ENCODE measurements at regions of chr3 and their contacts with region 1.

Region 1: GRCh38 chr3:14775011-14775410 is 43.8 kb upstream of the FGD5 start:
- DNase-seq: peak in 1 of 2 donors; percentile 61
- H3K4me3 ChIP-seq: no peak overlapping the region
- H3K27ac ChIP-seq: no peak overlapping the region
- H3K4me1 ChIP-seq: no peaks in the 10 kb centered on the region
- H3K27me3 ChIP-seq: no peaks in the 10 kb centered on the region
- CTCF ChIP-seq: no peak
- POLR2A ChIP-seq: no peak

Region 2: GRCh38 chr3:14312371-14312770 is 462.6 kb before region 1 on chr3:
- intact Hi-C with region 1: loop called (anchors 5 kb)
- DNase-seq: no peak
- H3K4me3 ChIP-seq: no peak overlapping the region
- H3K27ac ChIP-seq: no peak overlapping the region
- H3K4me1 ChIP-seq: no peaks in the 10 kb centered on the region
- H3K27me3 ChIP-seq: no peaks in the 10 kb centered on the region
- CTCF ChIP-seq: no peak
- POLR2A ChIP-seq: no peak

Region 3: DNA sequence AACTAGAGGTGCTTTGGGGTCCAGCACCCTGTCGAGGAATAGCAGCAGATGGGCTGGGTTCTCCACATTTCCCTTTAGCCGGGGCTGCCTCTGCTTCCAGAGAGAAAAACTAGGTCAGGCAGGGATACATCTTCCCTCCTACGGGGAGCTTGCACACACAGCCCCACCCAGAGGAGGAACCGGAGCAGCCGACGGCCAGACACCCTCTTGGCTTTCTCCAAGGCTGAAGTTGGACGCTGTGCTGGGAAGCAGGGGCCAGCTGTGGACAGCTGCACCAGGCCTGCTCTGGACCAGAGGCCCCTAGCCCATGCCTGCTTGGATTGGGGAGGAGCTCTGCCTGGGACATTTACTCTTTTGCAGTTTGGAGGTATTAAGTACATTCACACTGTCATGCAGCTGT is 127.7 kb after region 1 on chr3:
- intact Hi-C with region 1: no loop called
- DNase-seq: no peak
- H3K4me3 ChIP-seq: no peak overlapping the region
- H3K27ac ChIP-seq: peak overlapping the region; percentile 53
- H3K4me1 ChIP-seq: peaks cover 9% of the 10 kb centered on the region
- H3K27me3 ChIP-seq: no peaks in the 10 kb centered on the region
- CTCF ChIP-seq: no peak
- POLR2A ChIP-seq: no peak

Measured in vagina (tissue), 2 donors.